ENCODE measurements at regions of chr11 and their contacts with region 1.

Region 1: DNA sequence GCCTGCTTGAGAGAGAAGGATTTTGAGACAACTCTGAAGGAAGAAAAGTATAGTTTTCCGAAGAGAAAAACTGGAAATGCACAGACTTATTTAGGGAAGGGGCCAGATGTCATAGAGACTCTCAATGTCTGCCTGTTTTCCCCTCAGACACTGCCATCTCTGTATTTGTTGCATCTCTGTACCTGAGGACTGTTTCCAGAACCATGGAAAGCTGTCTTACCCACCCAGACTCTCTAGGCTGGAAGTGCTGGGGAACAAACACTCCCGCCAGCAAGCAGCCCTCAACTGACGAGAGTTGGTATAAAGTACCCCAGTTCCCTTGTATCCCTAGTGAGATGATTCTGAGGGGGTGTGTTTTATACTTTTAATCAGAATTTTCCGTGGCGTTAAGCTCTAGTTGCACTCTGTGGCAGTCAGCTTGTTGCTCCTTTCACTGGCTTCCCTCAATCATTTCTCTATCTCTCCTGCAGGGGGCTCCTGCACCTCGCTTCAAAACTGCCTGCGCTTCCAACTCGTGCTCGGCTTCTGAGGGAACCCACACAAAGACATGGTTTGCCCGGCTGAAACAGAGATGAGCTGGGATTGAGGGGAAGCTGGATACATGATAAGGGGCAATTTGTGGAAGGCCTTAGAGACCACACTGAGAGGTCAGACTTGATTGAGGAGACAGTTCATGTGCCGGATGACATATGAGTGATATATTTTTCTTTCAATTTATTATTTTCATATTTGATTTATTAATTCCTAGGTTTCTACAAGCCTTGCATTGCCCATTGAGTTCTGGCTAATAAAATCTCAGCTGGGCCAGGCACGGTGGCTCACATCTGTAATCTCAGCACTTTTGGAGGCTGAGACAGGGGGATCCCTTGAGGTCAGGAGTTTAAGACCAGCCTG is 36.9 kb upstream of the CLPB start:
- DNase-seq: no peak
- H3K4me3 ChIP-seq: no peak overlapping the region
- CTCF ChIP-seq: peak; percentile 82

Region 2: DNA sequence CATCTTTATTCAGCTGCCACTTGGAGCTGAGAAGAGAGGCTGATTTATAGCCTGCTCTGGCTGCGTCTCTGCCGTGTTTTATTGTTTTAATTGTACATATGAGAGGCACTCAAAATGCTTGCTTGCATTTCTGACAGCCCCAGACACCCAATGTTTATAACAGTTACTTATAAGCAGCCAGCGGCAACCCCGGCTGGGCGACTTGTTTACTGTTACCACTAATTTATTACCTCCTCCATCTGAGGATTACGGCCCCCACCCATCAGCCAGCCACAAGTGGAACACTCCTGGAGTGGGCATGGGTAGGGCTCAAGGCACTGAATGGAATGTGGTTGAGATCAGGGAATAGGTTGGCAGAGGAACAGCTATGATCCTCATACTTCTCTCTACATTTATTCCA is 98.1 kb before region 1 on chr11:
- CTCF ChIA-PET with region 1: no interaction called
- POLR2A ChIA-PET with region 1: no interaction called
- DNase-seq: no peak
- H3K4me3 ChIP-seq: no peak overlapping the region
- CTCF ChIP-seq: no peak

Region 3: DNA sequence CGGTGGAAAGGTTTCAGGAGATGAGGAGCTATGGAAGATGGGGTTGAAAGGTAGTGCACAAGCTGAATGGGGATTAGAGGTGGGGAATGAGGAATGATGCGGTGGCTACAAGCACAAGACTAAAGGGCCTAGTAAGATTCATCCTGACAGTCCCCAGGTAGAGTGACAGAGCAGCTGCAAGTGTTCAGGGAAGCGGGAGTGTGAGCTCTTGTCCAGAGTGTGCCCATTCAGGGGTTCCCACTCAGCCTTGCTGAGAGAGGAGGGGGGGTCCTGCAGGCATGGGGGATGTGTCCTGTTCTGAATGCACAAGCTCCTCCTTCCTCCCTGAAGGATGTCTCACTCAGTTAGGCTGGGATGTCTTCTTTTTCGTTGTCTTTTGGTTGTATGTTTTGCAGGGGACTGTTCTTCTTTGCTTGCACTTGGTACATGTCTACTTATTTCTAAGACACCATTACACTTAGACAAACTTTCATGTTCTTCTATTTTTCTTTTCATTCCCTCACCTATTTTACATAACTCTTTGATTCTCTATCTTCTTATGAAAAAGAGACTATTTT is 11.1 kb before region 1 on chr11:
- CTCF ChIA-PET with region 1: interaction called, 50 read pairs
- POLR2A ChIA-PET with region 1: no interaction called
- DNase-seq: no peak
- H3K4me3 ChIP-seq: no peak overlapping the region
- CTCF ChIP-seq: no peak

Region 4: DNA sequence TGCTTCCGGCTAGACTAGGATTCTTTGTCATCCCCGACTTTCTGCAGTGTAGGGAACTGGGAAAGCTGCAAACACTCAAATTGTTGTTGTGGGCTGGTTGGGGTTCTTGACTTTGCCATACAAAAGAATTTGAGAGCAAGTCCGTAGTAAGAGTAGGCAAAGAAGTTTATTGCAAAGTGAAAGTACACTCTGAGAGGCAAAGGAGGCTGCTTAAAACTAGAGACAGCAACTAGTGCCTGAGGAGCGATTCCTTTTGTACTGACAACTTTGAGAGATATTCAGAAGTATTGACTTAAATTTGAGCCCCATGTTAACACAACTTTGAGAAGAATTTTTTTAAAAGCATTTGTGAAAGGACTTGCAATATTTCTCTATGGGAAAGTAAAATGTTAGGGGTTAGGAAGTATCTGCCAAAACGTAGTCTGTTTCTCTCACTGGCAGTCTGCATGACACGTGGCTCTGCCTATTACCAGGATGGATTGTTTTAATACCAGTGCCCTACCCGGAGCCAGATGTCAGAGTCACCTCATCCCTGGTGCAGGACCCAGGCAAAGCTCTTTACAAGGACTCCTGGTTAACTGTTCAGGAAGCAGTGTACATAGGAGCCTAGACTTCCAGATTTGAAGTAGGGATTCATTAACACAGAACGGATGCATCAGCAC is 48.1 kb after region 1 on chr11:
- CTCF ChIA-PET with region 1: interaction called, 13 read pairs
- POLR2A ChIA-PET with region 1: no interaction called
- DNase-seq: no peak
- H3K4me3 ChIP-seq: peak overlapping the region; percentile 34
- CTCF ChIP-seq: no peak

Region 5: DNA sequence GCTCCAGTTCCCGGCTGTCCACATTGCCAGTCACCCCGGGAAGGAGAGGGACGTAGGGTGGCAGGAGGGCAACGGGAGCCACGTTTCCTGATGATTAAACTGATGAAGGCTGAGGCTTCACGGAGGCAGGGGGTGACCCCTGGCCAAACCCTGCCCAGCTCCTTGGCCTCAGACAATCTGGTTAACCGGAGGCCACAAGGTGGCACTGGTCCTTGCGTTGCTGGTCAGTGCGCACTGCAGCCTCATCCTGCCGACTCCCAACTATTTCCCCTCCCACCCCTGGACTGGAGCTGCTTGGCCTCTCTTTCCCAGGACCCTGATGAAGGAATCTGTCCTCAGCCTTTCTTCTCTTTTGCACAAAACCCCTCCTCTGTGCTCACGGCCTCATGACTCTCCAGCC is 127.7 kb after region 1 on chr11:
- CTCF ChIA-PET with region 1: interaction called, 12 read pairs
- POLR2A ChIA-PET with region 1: no interaction called
- DNase-seq: no peak
- H3K4me3 ChIP-seq: no peak overlapping the region
- CTCF ChIP-seq: peak; percentile 47

Region 6: GRCh38 chr11:72642884-72643511 is 171.7 kb after region 1 on chr11:
- CTCF ChIA-PET with region 1: interaction called, 55 read pairs
- POLR2A ChIA-PET with region 1: interaction called, 3 read pairs
- DNase-seq: no peak
- H3K4me3 ChIP-seq: peak overlapping the region; percentile 52
- CTCF ChIP-seq: peak; percentile 93

Region 7: GRCh38 chr11:72676861-72677341 is 205.6 kb after region 1 on chr11:
- CTCF ChIA-PET with region 1: interaction called, 113 read pairs
- POLR2A ChIA-PET with region 1: no interaction called
- DNase-seq: no peak
- H3K4me3 ChIP-seq: no peak overlapping the region
- CTCF ChIP-seq: no peak